CD8-positive, alpha-beta memory T cell (primary cell): ENCODE measurements at regions of chr1 and their contacts with region 1.

Region 1: GRCh38 chr1:236108027-236108648 is 34.2 kb upstream of the GPR137B start:
- DNase-seq: no peak
- H3K4me3 ChIP-seq: no peak overlapping the region
- H3K4me3 Mint-ChIP-seq: no peak overlapping the region
- H3K27ac ChIP-seq: no peak overlapping the region
- H3K27ac Mint-ChIP-seq: no peak overlapping the region
- H3K4me1 ChIP-seq: peaks cover 3% of the 10 kb centered on the region
- H3K4me1 Mint-ChIP-seq: peaks cover 2 to 6% (median 6%) of the 10 kb centered on the region in 3 donors
- H3K27me3 ChIP-seq: no peaks in the 10 kb centered on the region
- H3K27me3 Mint-ChIP-seq: peaks cover 0 to 3% of the 10 kb centered on the region in 2 donors

Region 2: GRCh38 chr1:235741294-235741693 is 366.8 kb before region 1 on chr1:
- CTCF ChIA-PET with region 1: no interaction called
- POLR2A ChIA-PET with region 1: no interaction called
- DNase-seq: no peak
- H3K4me3 ChIP-seq: no peak overlapping the region
- H3K4me3 Mint-ChIP-seq: no peak overlapping the region
- H3K27ac ChIP-seq: no peak overlapping the region
- H3K27ac Mint-ChIP-seq: peak overlapping the region in 1 of 8 donors; percentile 10
- H3K4me1 ChIP-seq: no peaks in the 10 kb centered on the region
- H3K4me1 Mint-ChIP-seq: peaks cover 0 to 4% (median 3%) of the 10 kb centered on the region in 3 donors
- H3K27me3 ChIP-seq: no peaks in the 10 kb centered on the region
- H3K27me3 Mint-ChIP-seq: no peaks in the 10 kb centered on the region

Region 3: GRCh38 chr1:236489710-236490377 is 381.7 kb after region 1 on chr1:
- CTCF ChIA-PET with region 1: interaction called, 12 read pairs
- POLR2A ChIA-PET with region 1: no interaction called
- DNase-seq: peak in 2 of 5 donors; percentile 27 to 36
- H3K4me3 ChIP-seq: no peak overlapping the region
- H3K4me3 Mint-ChIP-seq: no peak overlapping the region
- H3K27ac ChIP-seq: no peak overlapping the region
- H3K27ac Mint-ChIP-seq: peak overlapping the region in 1 of 8 donors; percentile 66
- H3K4me1 ChIP-seq: no peaks in the 10 kb centered on the region
- H3K4me1 Mint-ChIP-seq: peaks cover 11 to 29% (median 21%) of the 10 kb centered on the region in 3 donors
- H3K27me3 ChIP-seq: no peaks in the 10 kb centered on the region
- H3K27me3 Mint-ChIP-seq: peaks cover 2 to 4% of the 10 kb centered on the region in 2 donors